Heart left ventricle (tissue), 16 donors: ENCODE measurements at regions of chrX and their contacts with region 1.

Region 1: GRCh38 chrX:116198810-116199209 is 28.3 kb downstream of the AGTR2 start:
- DNase-seq: no peak
- ATAC-seq: no peak
- H3K4me3 ChIP-seq: no peak overlapping the region
- H3K27ac ChIP-seq: no peak overlapping the region
- H3K4me1 ChIP-seq: no peaks in the 10 kb centered on the region
- H3K27me3 ChIP-seq: peaks cover 0 to 6% (median 0%) of the 10 kb centered on the region in 9 donors
- CTCF ChIP-seq: peak in 1 of 12 donors; percentile 10
- POLR2A ChIP-seq: no peak

Region 2: DNA sequence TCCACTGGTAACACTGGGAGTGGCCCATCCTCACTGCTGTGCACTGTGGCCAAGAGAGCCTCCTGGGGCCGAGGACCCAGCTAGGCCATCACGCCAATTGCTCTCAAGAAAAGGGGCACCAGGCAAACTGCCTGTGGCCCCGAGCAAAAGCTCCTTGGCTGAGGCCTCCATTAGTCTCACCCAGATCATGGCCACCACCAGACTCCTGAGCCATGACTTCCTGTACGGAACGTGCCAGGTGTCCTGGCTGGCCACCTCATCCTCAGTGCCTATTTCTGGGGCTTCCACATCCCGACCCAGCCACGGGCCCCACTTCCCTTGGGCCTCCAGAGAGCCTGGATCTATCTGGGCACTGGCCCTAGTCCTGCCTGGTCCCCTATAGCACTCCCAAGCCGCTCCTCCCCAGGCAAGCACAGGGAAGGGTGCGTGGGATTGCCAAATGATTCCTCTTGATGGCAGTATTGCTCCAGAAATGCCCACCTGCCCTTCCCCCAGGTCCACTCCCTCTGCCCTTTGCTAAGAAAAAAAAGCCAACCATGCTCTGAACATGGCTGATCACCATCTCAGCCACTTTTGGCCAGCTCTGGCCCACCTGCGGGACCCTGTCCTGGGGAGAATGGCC is 240.8 kb before region 1 on chrX:
- intact Hi-C with region 1: no loop called
- DNase-seq: no peak
- ATAC-seq: peak in 1 of 4 donors; percentile 48
- H3K4me3 ChIP-seq: no peak overlapping the region
- H3K27ac ChIP-seq: no peak overlapping the region
- H3K4me1 ChIP-seq: no peaks in the 10 kb centered on the region
- H3K27me3 ChIP-seq: peaks cover 0 to 29% (median 0%) of the 10 kb centered on the region in 9 donors
- CTCF ChIP-seq: no peak
- POLR2A ChIP-seq: no peak

Region 3: GRCh38 chrX:116031331-116031730 is 167.5 kb before region 1 on chrX:
- intact Hi-C with region 1: no loop called
- DNase-seq: no peak
- ATAC-seq: no peak
- H3K4me3 ChIP-seq: no peak overlapping the region
- H3K27ac ChIP-seq: no peak overlapping the region
- H3K4me1 ChIP-seq: no peaks in the 10 kb centered on the region
- H3K27me3 ChIP-seq: peaks cover 0 to 6% (median 0%) of the 10 kb centered on the region in 9 donors
- CTCF ChIP-seq: no peak
- POLR2A ChIP-seq: no peak

Region 4: GRCh38 chrX:116135277-116135676 is 63.5 kb before region 1 on chrX:
- intact Hi-C with region 1: loop called in 1 of 10 experiments (anchors 10 kb)
- DNase-seq: no peak
- ATAC-seq: no peak
- H3K4me3 ChIP-seq: no peak overlapping the region
- H3K27ac ChIP-seq: no peak overlapping the region
- H3K4me1 ChIP-seq: no peaks in the 10 kb centered on the region
- H3K27me3 ChIP-seq: no peaks in the 10 kb centered on the region
- CTCF ChIP-seq: no peak
- POLR2A ChIP-seq: no peak